ENCODE measurements at regions of chr3 and their contacts with region 1.

Region 1: GRCh38 chr3:141452036-141452435 is 34.8 kb upstream of the RASA2 start:
- DNase-seq: no peak
- ATAC-seq: peak; percentile 67
- H3K4me3 ChIP-seq: no peak overlapping the region
- H3K27ac ChIP-seq: no peak overlapping the region
- H3K4me1 ChIP-seq: peaks cover 0 to 8% of the 10 kb centered on the region in 2 experiments; a peak in 1 of 4 replicates
- H3K27me3 ChIP-seq: no peaks in the 10 kb centered on the region
- CTCF ChIP-seq: peak; percentile 37 to 93 (median 54); a peak in 5 of 6 replicates
- POLR2A ChIP-seq: no peak
- RAD21 ChIP-seq: peak; percentile 94

Region 2: GRCh38 chr3:141000027-141000663 is 451.9 kb before region 1 on chr3:
- CTCF ChIA-PET with region 1: no interaction called
- POLR2A ChIA-PET with region 1: no interaction called
- RAD21 ChIA-PET with region 1: no interaction called
- intact Hi-C with region 1: loop called (anchors 10 kb)
- DNase-seq: peak; percentile 54
- ATAC-seq: peak; percentile 99
- H3K4me3 ChIP-seq: no peak overlapping the region
- H3K27ac ChIP-seq: no peak overlapping the region
- H3K4me1 ChIP-seq: no peaks in the 10 kb centered on the region
- H3K27me3 ChIP-seq: no peaks in the 10 kb centered on the region
- CTCF ChIP-seq: peak; percentile 76 to 90 (median 81)
- POLR2A ChIP-seq: no peak
- RAD21 ChIP-seq: peak; percentile 88

Region 3: DNA sequence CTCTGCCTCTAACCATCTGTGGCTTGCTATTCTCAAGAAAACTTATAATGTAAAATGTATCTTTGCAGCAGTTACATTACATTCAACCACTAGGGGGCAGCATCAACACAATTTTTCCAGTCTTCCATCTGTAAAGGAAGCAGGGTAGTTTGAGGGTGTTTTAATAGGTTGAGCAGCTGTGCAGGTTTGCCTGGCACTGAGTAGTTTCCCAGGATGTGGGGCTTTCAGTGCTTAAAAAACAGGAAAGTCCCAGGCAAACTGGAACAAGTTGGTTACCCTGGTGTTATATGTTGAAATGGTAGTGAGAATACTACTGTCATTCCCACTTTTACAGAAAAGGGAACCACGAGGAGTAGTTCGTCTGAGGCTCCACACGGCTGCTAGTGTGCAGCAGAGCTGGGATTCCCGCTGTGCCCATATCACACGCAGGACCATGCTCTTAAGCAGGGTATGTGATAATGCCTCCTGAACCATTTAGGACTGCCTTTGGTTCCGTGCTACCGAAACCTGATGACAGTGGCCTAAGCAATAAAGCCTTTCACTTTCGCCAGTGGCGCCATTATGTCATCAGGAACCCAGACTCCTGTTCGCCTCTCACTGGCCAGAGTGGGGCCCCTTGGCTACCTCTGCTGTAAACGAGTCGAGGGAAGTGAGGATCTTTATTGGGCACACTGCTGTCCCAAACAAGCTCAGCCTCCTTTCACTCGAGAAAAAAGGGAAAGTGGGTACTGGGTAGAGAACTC is 148.4 kb before region 1 on chr3:
- CTCF ChIA-PET with region 1: interaction called, 104 read pairs
- POLR2A ChIA-PET with region 1: interaction called, 5 read pairs
- RAD21 ChIA-PET with region 1: interaction called, 3 to 4 read pairs
- intact Hi-C with region 1: no loop called
- DNase-seq: peak; percentile 51
- ATAC-seq: peak; percentile 69
- H3K4me3 ChIP-seq: no peak overlapping the region
- H3K27ac ChIP-seq: no peak overlapping the region
- H3K4me1 ChIP-seq: peaks cover 0 to 6% of the 10 kb centered on the region in 2 experiments; a peak in 2 of 4 replicates
- H3K27me3 ChIP-seq: no peaks in the 10 kb centered on the region
- CTCF ChIP-seq: peak; percentile 70 to 91 (median 77)
- POLR2A ChIP-seq: no peak
- RAD21 ChIP-seq: peak; percentile 80

Region 4: GRCh38 chr3:141360888-141361598 is 91.0 kb before region 1 on chr3:
- CTCF ChIA-PET with region 1: interaction called, 50 read pairs
- POLR2A ChIA-PET with region 1: interaction called, 5 read pairs
- RAD21 ChIA-PET with region 1: interaction called, 4 to 7 read pairs
- intact Hi-C with region 1: loop called (anchors 1 kb)
- DNase-seq: peak; percentile 59
- ATAC-seq: peak; percentile 89
- H3K4me3 ChIP-seq: peak overlapping the region; percentile 20 to 41; a peak in 2 of 4 replicates
- H3K27ac ChIP-seq: no peak overlapping the region
- H3K4me1 ChIP-seq: peaks cover 7 to 20% of the 10 kb centered on the region in 2 experiments
- H3K27me3 ChIP-seq: no peaks in the 10 kb centered on the region
- CTCF ChIP-seq: peak; percentile 80 to 95 (median 81)
- POLR2A ChIP-seq: no peak
- RAD21 ChIP-seq: peak; percentile 94